Activated CD8-positive, alpha-beta memory T cell treated with anti-CD3 and anti-CD28 coated beads, Interleukin-2, amount 10 ng/mL, durations not matched to agents 7 days and 5 days (primary cell): ENCODE measurements at regions of chr14 and their contacts with region 1.

Region 1: DNA sequence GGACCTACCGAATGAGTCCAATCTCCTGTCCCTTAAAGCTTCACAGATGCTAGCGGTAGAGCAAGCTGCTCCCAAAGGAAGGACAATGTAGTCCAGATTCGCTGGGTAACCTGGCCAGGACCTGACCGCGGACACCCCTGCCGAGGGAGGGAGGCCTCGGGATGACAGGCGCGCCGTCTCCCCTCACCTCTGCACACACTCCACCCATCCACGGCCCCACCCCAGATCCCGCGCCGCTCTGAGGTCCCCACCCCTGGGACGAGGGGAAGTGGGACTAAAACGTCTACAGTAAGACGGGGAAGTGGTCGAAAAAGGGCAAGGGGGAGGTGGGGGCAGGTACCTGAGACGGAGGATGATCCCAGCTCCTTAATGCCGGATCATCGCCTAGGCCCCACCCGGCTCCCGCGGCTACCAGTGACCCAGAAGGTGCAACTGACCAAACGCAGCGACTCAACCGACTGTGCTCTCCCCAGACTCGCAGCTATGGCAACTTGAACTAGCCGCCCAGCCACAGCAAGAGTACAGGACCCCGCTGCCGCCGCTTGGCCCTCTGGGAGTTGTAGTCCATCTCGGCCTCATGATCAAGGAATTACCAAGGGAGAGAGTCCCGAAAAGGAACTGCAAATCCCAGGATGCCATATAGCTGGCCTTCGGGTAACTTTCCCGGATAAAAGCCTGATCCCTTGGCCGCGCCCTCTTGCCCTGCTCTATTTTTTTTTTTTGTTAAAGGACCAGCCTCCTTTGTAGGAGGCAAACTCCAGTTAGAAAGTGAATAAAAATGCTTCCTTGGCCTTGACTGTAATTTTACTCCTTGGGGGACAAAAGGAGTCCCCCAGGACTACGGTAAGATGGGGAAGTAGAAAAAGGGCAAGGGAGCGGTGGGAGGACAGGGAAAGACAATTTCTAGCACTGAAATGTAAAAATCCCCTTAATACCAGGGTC is at the start of gene CEP128:
- DNase-seq: peak; percentile 95
- ATAC-seq: peak; percentile 97
- H3K4me3 Mint-ChIP-seq: peak within 1 kb of the TSS; percentile 91
- H3K27ac Mint-ChIP-seq: peak within 1 kb of the TSS; percentile 86
- H3K4me1 Mint-ChIP-seq: peaks cover 34% of the 10 kb centered on the region
- H3K27me3 Mint-ChIP-seq: no peaks in the 10 kb centered on the region
- total RNA-seq, gene CEP128: 28.9 to 47.4 TPM

Region 2: DNA sequence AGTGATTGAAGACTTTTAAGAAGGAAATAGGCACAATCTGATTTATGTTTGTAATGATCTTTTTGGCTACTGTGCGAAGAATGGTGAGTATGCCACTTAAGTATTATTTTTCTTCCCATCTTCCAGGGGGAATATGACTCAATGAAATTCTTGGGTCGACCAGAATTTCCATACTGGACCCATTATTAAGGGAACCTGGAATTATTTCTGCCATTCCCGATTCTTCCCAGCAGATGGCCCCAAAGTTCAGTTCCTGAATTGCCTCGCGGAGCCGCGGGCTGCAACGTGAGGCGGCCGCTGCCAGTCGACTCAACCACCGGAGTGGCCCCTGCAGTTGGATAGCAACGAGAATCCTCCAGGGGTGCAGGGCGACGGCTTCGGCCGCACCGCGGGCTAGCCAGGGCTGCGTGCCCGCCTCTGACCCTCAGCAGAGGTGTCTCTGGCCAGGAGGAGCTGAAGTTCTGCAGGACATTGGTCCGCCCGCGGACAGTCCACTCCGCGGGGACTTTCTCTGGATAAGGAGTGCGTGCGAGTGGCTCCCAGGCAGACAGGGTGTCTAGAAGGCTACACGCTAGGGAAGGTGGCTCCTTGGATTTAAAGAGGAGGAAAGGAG is 13.3 kb after region 1 on chr14:
- CTCF ChIA-PET with region 1: interaction called, 24 read pairs
- DNase-seq: peak; percentile 82
- ATAC-seq: peak; percentile 50
- H3K4me3 Mint-ChIP-seq: peak overlapping the region; percentile 72
- H3K27ac Mint-ChIP-seq: peak overlapping the region; percentile 70
- H3K4me1 Mint-ChIP-seq: peaks cover 43% of the 10 kb centered on the region
- H3K27me3 Mint-ChIP-seq: peaks cover 33% of the 10 kb centered on the region